Activated T-helper 1 cell treated with anti-CD3 and anti-CD28 coated beads, Interleukin-12 subunit alpha, Interleukin-12 subunit beta, Interleukin-2, Interleukin-4 antibody, amounts not matched to agents 30 ng/mL and 10 ng/mL and 1 ng/mL, durations not matched to agents 14 hours and 24 hours and 36 hours (primary cell): ENCODE measurements at regions of chr12 and their contacts with region 1.

Region 1: DNA sequence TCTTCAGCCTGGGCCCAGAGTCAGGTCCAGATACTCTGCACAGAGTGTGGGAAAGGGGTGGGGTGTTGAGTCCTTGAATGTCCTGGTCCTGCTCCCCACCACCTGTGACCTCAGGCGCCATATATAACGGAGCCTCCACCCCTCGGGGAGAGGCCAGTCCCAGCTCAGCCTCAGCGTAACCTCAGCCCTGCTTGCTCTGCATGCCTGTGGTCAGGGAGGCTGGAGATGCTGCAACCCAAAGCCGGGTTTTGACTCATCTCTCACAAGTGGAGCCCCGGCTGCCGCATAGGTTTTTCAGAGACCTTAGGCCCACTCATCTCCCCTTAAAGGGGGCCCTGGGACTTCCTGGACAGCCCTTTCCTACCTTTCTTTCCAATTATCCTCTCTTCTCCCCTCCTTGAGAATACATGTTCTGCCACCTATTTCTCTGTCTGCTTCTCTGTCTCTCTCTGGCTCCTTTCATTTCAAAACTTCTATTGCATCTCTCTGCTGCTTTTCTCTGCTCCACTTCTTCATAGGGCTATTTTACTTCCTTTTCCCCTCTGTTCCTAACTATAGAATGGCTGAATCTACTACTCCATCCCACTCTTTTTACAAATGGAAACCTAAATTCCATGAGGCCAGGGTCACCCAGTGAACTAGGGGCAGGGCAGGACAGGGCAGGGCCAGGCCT is 1.2 kb downstream of the ITGB7 start:
- DNase-seq: peak; percentile 74
- H3K4me3 Mint-ChIP-seq: peak overlapping the region; percentile 82
- H3K27ac Mint-ChIP-seq: peak overlapping the region; percentile 90
- H3K4me1 Mint-ChIP-seq: peaks cover 67% of the 10 kb centered on the region
- H3K27me3 Mint-ChIP-seq: no peaks in the 10 kb centered on the region

Region 2: GRCh38 chr12:53231826-53232645 is 26.2 kb after region 1 on chr12 and contains the start of gene RARG:
- intact Hi-C with region 1: loop called (anchors 1 kb)
- DNase-seq: peak; percentile 42
- H3K4me3 Mint-ChIP-seq: peak within 1 kb of the TSS; percentile 88
- H3K27ac Mint-ChIP-seq: peak within 1 kb of the TSS; percentile 88
- H3K4me1 Mint-ChIP-seq: peaks cover 78% of the 10 kb centered on the region
- H3K27me3 Mint-ChIP-seq: no peaks in the 10 kb centered on the region
- total RNA-seq, gene RARG: 58.6 and 61.6 TPM in 2 replicates